Caco-2 (cell line): ENCODE measurements at regions of chr9 and their contacts with region 1.

Region 1: DNA sequence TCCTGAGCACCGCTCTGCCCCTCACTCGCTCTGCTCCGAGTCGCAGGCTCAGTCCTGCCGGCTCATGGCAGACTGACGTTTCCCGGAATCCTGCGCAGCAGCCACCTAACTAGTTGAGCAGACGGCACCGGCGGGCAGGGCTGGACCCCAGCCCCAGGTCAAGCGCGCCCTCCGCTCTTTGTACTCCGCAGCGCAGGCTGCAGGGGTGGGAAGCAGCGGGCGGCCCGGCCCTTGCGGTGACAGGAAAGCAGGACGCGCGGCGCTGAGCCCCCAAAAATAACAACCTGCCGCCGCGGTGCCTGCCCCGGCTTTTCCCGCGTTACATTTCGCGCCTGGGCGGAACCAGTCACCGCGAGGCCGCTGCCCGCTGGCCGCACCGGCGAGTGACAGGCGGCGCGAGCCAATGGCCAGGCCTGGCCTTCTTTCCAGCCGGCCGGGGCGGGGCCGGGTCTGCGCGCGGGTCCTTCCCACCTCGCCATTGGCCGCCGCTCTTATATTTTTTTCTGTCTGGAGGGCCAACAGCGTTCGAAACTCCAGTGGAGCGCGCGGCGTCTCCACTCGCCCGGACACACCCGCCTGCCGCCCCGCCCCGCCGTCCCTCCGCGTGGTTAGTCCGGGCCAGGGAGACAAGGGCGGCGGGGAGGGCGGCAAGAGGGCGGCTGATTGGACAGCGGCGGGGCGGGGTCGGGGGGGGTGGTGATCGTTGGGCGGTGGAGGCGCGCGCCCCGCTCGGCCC is at the start of gene ZNF367:
- DNase-seq: peak; percentile 98
- H3K4me3 ChIP-seq: peak within 1 kb of the TSS; percentile 67
- H3K4me3 Mint-ChIP-seq: peak within 1 kb of the TSS; percentile 94
- H3K27ac Mint-ChIP-seq: peak within 1 kb of the TSS; percentile 94
- H3K4me1 ChIP-seq: peaks cover 19% of the 10 kb centered on the region
- H3K4me1 Mint-ChIP-seq: peaks cover 17% of the 10 kb centered on the region
- H3K27me3 ChIP-seq: no peaks in the 10 kb centered on the region
- H3K27me3 Mint-ChIP-seq: no peaks in the 10 kb centered on the region
- CTCF ChIP-seq: no peak
- total RNA-seq, gene ZNF367: 9.3 and 10.0 TPM in 2 replicates

Region 2: DNA sequence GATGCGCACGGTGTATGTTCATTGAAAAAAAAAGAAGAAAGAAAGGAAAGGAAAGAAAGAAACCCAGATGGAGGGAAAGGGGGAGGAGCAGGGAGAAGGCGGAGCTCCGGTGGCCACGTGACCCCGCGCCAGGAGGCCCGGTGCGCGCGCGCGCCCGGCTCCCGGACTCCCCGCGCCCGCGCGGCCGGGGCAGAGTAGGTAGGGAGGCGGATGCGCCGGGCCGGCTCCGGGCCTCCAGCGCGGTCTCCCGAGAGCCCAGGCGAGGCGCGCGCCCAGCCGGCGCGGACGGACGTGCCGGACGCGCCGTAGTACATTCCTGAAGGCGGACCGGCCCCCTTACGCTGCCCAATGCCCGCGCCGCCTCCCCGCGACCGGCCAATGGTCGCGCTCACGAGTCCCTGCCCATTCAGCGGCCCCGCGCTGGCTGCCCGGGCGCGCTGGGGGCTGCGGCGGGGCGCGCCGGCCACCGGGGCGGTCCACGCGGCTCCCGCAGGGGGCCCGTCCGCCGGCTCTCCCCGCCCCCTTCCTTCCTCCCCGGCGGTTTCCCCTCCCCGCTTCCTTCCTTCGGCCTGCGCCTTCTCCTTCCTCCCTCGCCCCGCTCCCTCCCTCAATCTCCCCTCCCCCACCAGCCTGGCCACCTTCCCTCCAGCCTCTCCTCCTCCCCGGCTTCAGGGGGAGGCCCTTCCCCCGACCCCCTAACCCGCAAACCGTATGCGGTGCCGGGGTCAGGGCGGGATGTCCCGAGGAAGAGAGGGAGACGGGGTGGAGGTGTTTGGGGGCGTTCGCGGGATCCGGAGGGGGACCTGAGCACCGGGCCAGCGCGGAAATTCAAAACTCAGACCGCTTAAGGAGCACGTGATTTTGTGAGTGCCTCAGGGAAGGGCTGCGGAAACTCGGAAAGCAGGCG is 907.3 kb before region 1 on chr9:
- CTCF ChIA-PET with region 1: no interaction called
- POLR2A ChIA-PET with region 1: no interaction called
- intact Hi-C with region 1: loop called (anchors 5 kb)
- DNase-seq: peak; percentile 96 to 97
- H3K4me3 ChIP-seq: peak overlapping the region; percentile 94
- H3K4me3 Mint-ChIP-seq: peak overlapping the region; percentile 93
- H3K27ac Mint-ChIP-seq: peak overlapping the region; percentile 87
- H3K4me1 ChIP-seq: peaks cover 11% of the 10 kb centered on the region; the same call in 1 of the 2 replicates
- H3K4me1 Mint-ChIP-seq: no peaks in the 10 kb centered on the region
- H3K27me3 ChIP-seq: no peaks in the 10 kb centered on the region
- H3K27me3 Mint-ChIP-seq: no peaks in the 10 kb centered on the region
- CTCF ChIP-seq: no peak

Region 3: DNA sequence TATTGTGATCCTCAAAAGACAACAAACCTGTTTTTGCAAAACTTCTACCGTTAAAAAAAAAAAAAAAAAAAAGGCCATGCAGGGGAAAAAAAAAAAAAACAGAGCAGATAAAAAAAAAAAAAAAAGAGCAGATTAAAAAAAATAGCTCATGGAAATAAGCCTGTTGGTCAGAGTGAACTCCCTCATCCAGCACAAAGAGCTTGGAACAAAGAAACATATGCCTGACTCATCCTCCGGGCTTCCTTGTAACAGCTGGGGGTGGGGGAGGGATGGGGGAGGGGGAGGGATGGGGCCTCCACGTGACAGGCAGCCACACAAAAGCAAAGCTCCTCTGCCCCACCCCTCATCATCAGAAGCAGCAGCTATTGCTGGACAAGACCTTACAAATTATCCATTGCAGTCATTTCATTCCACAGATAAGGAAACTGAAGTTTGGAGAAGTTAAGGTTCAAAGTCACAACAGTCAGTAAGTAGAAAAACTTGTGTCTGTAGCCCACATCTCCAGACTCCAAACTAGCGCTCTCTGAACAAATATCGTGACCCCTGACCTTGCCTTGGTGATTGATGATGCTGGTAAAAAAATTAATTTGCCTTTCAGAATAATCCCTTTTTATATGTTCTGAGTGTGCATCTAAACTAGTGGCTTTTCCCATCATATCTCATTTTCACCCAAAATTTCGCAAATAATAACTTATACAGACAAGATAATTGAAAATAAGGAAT is 73.6 kb before region 1 on chr9:
- CTCF ChIA-PET with region 1: no interaction called
- POLR2A ChIA-PET with region 1: no interaction called
- intact Hi-C with region 1: loop called (anchors 1 kb)
- DNase-seq: peak; percentile 74 to 91
- H3K4me3 ChIP-seq: no peak overlapping the region
- H3K4me3 Mint-ChIP-seq: no peak overlapping the region
- H3K27ac Mint-ChIP-seq: no peak overlapping the region
- H3K4me1 ChIP-seq: peaks cover 48% of the 10 kb centered on the region
- H3K4me1 Mint-ChIP-seq: peaks cover 7% of the 10 kb centered on the region
- H3K27me3 ChIP-seq: no peaks in the 10 kb centered on the region
- H3K27me3 Mint-ChIP-seq: no peaks in the 10 kb centered on the region
- CTCF ChIP-seq: no peak

Region 4: DNA sequence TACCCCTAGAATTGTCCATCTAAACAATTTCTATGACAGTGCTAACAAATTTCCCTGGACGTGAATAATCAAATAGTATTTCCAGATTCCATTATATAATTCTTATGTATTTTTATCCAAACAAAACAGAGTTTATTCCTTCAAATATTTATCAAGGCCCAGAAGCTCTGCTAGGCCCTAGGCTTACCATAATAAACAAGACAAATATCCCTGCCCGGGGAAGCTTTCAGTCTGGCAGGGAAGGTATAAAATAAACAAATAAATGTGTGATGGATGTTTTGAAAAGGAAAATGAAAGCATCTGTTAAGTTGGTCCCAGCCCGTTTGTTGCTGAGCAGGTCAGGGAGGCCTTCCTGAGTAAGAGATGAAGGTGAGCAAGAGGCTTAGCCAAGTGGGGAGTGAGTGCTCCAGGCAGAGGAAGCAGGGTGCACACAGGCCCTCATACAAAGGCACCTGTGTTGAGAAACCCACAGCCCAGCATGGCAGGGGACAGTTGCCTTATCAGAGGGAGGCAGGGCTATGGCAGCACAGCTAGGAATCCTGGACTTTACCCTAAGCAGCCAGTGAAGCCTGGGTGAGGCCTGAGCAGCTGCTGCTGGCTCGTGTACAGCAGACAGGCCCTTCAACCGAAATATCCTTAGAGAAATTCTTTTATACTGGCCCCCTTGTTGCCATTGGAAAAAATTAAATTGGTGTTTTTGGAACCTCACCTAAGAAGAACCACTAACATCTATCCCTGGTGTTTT is 27.0 kb before region 1 on chr9:
- CTCF ChIA-PET with region 1: no interaction called
- POLR2A ChIA-PET with region 1: interaction called, 4 read pairs
- intact Hi-C with region 1: loop called (anchors 1 kb)
- DNase-seq: peak; percentile 84 to 91
- H3K4me3 ChIP-seq: no peak overlapping the region
- H3K4me3 Mint-ChIP-seq: no peak overlapping the region
- H3K27ac Mint-ChIP-seq: peak overlapping the region; percentile 87
- H3K4me1 ChIP-seq: peaks cover 37% of the 10 kb centered on the region
- H3K4me1 Mint-ChIP-seq: peaks cover 30% of the 10 kb centered on the region
- H3K27me3 ChIP-seq: no peaks in the 10 kb centered on the region
- H3K27me3 Mint-ChIP-seq: no peaks in the 10 kb centered on the region
- CTCF ChIP-seq: no peak

Region 5: GRCh38 chr9:96566498-96567207 is 148.4 kb after region 1 on chr9:
- CTCF ChIA-PET with region 1: no interaction called
- POLR2A ChIA-PET with region 1: no interaction called
- intact Hi-C with region 1: loop called (anchors 1 kb)
- DNase-seq: peak; percentile 98
- H3K4me3 ChIP-seq: peak overlapping the region; percentile 83
- H3K4me3 Mint-ChIP-seq: peak overlapping the region; percentile 74
- H3K27ac Mint-ChIP-seq: peak overlapping the region; percentile 85
- H3K4me1 ChIP-seq: peaks cover 47% of the 10 kb centered on the region
- H3K4me1 Mint-ChIP-seq: peaks cover 30% of the 10 kb centered on the region
- H3K27me3 ChIP-seq: no peaks in the 10 kb centered on the region
- H3K27me3 Mint-ChIP-seq: no peaks in the 10 kb centered on the region
- CTCF ChIP-seq: peak; percentile 67 to 87